Activated CD8-positive, alpha-beta T cell treated with anti-CD3 and anti-CD28 coated beads for 36 hours (primary cell): ENCODE measurements at regions of chr20 and their contacts with region 1.

Region 1: GRCh38 chr20:34522969-34523871 is 7.0 kb downstream of the DYNLRB1 start:
- DNase-seq: peak; percentile 72
- ATAC-seq: peak; percentile 71
- H3K4me3 Mint-ChIP-seq: no peak overlapping the region
- H3K27ac Mint-ChIP-seq: no peak overlapping the region
- H3K4me1 Mint-ChIP-seq: peaks cover 40% of the 10 kb centered on the region
- H3K27me3 Mint-ChIP-seq: no peaks in the 10 kb centered on the region
- CTCF ChIP-seq: peak; percentile 55

Region 2: DNA sequence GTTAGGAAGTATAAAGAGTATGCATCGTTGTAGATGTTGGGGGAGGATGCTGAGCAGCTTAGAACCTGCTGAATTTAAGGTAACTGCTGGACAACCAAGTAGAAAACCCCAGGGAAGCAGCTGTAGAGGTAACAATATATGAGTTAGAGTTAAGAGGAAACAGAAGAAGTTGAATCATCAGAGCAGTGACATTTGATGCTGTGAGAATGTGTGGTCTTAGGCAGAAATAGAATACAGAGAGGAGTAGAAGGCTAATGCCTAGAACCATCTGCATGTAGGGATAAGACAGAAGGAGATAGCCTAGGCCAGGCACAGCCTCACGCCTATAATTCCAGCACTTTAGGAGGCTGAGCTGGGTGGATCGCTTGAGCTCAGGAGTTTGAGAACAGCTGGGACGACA is 29.6 kb before region 1 on chr20:
- CTCF ChIA-PET with region 1: no interaction called
- POLR2A ChIA-PET with region 1: no interaction called
- intact Hi-C with region 1: no loop called
- DNase-seq: no peak
- ATAC-seq: no peak
- H3K4me3 Mint-ChIP-seq: no peak overlapping the region
- H3K27ac Mint-ChIP-seq: peak overlapping the region; percentile 41
- H3K4me1 Mint-ChIP-seq: peaks cover 6% of the 10 kb centered on the region
- H3K27me3 Mint-ChIP-seq: no peaks in the 10 kb centered on the region
- CTCF ChIP-seq: no peak

Region 3: DNA sequence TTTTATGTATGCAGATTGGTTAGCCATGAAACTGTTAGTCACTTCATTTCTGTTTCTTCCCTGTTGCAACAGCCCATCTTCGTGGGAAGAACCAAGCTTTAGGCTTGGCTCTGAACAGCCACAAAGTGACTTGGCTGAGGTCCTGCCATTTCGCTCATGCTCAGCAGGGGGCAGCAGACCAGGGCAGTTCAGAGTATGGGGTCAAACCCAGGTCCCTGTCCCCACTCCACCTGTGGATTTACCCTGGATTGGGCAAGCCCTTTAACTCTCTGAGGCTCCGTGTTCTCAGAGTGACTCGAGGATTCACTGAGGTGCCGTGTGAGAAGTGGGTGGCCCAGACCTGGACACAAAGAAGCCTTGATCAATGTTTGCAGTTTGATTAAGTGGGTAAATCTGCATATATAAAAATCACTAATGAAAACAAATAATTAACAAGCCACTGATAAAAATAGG is 15.5 kb after region 1 on chr20:
- CTCF ChIA-PET with region 1: interaction called, 12 read pairs
- POLR2A ChIA-PET with region 1: no interaction called
- intact Hi-C with region 1: no loop called
- DNase-seq: peak; percentile 72
- ATAC-seq: peak; percentile 85
- H3K4me3 Mint-ChIP-seq: no peak overlapping the region
- H3K27ac Mint-ChIP-seq: no peak overlapping the region
- H3K4me1 Mint-ChIP-seq: peaks cover 7% of the 10 kb centered on the region
- H3K27me3 Mint-ChIP-seq: no peaks in the 10 kb centered on the region
- CTCF ChIP-seq: peak; percentile 83

Region 4: DNA sequence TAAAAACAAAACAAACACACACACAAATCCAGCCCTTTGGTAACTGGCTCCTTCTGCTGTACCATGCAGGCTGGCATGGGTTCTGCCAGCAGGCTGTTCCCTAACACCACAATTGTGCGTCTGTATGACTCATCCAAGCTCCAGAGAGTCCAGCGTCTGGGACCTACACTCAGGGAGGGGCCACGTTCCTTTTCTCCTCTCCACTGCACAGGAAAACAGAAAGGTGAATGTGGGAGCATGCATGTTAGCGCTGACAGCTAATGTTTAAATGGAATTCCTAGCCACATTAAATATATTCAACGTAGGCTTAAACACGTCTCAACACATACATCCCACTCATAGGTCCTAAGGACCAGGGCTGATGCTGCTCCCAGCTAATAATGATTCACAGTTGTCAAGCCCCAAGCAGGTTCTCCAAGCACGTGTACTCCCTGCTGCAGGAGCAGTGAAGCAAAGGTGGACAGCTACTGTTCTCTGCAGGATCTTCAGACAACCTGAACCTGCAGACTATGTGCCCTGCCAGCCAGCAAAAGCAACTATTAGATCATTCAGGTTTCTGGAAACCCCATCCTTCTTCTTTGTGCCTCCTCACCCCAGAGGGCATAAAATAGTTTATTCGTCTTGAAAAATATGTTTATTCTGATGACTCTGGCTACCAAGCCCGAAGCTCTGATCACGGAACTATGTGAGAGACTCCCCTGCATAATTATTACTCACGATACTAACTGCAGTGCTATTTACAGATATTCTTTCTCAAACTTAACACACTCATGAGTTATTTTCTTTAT is 56.2 kb after region 1 on chr20:
- CTCF ChIA-PET with region 1: no interaction called
- POLR2A ChIA-PET with region 1: no interaction called
- intact Hi-C with region 1: no loop called
- DNase-seq: no peak
- ATAC-seq: no peak
- H3K4me3 Mint-ChIP-seq: no peak overlapping the region
- H3K27ac Mint-ChIP-seq: no peak overlapping the region
- H3K4me1 Mint-ChIP-seq: peaks cover 23% of the 10 kb centered on the region
- H3K27me3 Mint-ChIP-seq: no peaks in the 10 kb centered on the region
- CTCF ChIP-seq: no peak